Activated naive CD4-positive, alpha-beta T cell treated with anti-CD3 and anti-CD28 coated beads for 36 hours (primary cell): ENCODE measurements at regions of chr4 and their contacts with region 1.

Region 1: DNA sequence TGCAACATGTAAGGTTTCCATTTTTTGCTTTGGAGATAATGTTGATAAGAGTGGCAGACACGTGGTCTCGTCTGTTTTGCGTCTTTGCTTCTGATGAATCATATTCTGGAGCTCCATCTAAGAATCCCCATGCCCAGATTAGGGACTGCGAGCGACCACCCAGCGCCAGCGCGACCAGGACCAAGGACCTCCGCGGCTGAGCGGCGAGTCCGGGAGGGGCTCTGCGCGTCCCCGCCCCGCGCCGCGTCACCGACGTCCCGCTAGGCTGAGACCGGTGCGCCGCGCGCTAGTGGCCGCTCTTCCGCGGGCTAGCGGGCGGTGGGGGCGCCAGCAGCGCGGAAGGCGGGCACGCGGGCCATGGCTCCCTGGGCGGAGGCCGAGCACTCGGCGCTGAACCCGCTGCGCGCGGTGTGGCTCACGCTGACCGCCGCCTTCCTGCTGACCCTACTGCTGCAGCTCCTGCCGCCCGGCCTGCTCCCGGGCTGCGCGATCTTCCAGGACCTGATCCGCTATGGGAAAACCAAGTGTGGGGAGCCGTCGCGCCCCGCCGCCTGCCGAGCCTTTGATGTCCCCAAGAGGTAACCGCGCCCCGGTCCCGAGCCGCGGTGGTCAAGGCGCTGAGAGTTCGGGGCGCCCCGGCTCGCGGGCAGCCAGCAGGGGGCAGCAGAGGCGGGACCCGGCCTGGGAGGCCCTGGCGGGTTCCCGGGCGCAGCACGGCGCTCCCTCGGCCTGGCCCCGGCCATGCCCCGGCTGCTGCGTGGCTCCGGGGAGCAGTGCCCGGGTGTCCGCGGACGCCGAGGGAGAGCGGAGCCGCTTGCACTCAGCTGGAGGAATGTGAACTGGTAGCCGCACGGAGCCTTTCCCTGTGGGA is at the start of gene SRD5A3:
- DNase-seq: peak; percentile 80
- H3K4me3 Mint-ChIP-seq: peak within 1 kb of the TSS; percentile 87
- H3K27ac Mint-ChIP-seq: peak within 1 kb of the TSS; percentile 90
- H3K4me1 Mint-ChIP-seq: peaks cover 20% of the 10 kb centered on the region
- H3K27me3 Mint-ChIP-seq: no peaks in the 10 kb centered on the region
- total RNA-seq, gene SRD5A3: 21.7 to 22.3 TPM

Region 2: DNA sequence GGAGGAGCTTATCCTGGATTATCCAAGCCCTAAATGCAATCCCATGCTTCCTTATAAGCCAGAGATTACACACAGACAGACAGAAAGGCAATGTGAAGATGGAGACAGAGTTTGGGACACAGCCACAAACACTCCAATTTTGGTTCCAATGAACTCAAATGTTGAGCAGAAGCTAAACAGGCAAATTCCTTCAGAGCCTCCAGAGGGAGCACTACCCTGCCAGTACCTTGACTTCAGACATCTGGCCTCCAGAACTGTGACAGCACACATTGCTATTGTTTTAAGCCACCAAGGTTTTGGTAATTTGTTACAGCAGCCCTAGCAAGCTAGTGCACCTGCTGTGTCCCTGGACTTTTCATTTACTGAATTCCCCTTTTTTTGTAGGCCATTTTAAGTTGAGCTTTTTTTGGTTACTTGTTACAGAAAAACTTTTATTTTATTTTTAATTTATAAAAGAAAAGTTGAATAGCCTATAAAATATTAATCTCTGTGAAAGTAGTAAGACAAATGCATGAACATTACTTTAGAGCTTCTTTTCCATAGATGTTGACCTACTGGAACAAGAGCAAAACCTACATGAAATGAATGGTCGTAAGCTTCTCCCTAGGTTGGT is 33.6 kb before region 1 on chr4:
- CTCF ChIA-PET with region 1: interaction called, 11 read pairs
- intact Hi-C with region 1: no loop called
- DNase-seq: peak; percentile 58
- H3K4me3 Mint-ChIP-seq: no peak overlapping the region
- H3K27ac Mint-ChIP-seq: no peak overlapping the region
- H3K4me1 Mint-ChIP-seq: peaks cover 20% of the 10 kb centered on the region
- H3K27me3 Mint-ChIP-seq: no peaks in the 10 kb centered on the region

Region 3: GRCh38 chr4:55358668-55359067 is 12.5 kb after region 1 on chr4:
- CTCF ChIA-PET with region 1: interaction called, 4 read pairs
- intact Hi-C with region 1: loop called (anchors 1 kb)
- DNase-seq: no peak
- H3K4me3 Mint-ChIP-seq: no peak overlapping the region
- H3K27ac Mint-ChIP-seq: peak overlapping the region; percentile 41
- H3K4me1 Mint-ChIP-seq: peaks cover 22% of the 10 kb centered on the region
- H3K27me3 Mint-ChIP-seq: no peaks in the 10 kb centered on the region

Region 4: DNA sequence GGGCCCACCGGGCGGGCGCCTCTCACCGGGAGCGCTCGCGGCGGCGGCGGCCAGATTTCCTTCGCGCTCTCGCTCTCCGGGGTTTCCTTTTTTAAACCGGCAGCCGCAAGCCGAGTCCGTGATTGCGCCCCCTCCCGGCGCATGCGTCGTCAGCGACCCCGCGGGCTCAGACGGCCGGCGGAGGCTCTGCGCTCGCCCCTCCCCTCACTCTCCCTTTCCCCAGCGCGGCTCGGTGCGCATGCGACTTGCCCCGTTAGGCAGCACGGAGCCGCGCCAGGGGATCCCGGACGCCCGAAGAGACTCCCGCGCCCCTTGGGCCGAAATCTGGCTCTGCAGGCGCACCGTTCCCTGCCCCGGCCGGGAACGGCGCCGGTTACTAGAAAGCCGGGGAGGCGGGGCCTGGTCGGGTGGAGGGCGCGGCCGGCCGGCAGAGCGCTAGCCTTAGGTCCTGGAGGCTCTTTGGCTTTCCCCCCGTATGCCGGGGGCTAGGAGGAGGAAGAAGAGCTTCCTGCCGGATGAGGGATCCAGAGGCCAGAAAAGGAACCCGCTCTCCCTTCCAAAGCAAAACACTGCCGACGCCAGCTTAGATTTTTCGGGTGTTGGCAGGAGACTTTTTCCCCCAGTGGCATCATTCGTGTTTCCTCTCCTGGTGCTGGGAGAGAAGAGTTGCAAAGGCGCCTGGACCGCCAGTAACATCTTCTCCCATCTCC is 200.7 kb after region 1 on chr4 and contains the start of gene CLOCK:
- CTCF ChIA-PET with region 1: interaction called, 11 read pairs
- intact Hi-C with region 1: loop called (anchors 2 kb)
- DNase-seq: peak; percentile 83
- H3K4me3 Mint-ChIP-seq: peak within 1 kb of the TSS; percentile 84
- H3K27ac Mint-ChIP-seq: peak within 1 kb of the TSS; percentile 89
- H3K4me1 Mint-ChIP-seq: peaks cover 50% of the 10 kb centered on the region
- H3K27me3 Mint-ChIP-seq: no peaks in the 10 kb centered on the region
- total RNA-seq, gene CLOCK: 8.1 to 8.5 TPM

Region 5: DNA sequence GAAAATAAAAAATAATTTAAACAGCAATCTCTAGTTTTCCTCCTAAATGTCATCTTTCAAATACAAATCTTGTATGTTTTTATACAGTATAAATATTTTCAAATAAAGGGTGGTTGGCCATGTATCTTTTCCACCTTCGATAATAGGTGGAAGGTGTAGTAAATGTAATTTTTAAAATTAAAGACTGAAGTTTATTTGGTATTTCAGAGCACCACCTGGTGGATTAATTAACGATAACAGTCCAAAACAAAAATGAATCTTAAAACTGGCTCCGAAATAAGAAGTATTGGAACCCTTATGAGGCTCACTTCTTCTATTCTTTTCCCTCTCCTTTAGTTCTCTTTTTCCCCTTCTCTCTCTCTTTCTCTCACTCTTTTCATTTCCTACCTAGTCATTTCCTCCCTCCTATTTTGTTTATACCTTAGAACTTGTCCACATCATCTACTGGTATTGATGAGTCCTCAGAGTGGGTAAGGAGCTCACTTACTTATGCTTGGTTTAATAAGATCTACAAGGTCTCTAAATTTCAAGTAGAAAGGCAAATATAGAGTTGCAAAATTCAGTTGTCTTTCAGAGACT is 390.5 kb after region 1 on chr4:
- CTCF ChIA-PET with region 1: no interaction called
- intact Hi-C with region 1: loop called (anchors 2 kb)
- DNase-seq: no peak
- H3K4me3 Mint-ChIP-seq: no peak overlapping the region
- H3K27ac Mint-ChIP-seq: no peak overlapping the region
- H3K4me1 Mint-ChIP-seq: no peaks in the 10 kb centered on the region
- H3K27me3 Mint-ChIP-seq: peaks cover 34% of the 10 kb centered on the region

Region 6: GRCh38 chr4:55993994-55994663 is 647.9 kb after region 1 on chr4:
- CTCF ChIA-PET with region 1: no interaction called
- intact Hi-C with region 1: no loop called
- DNase-seq: peak; percentile 36
- H3K4me3 Mint-ChIP-seq: no peak overlapping the region
- H3K27ac Mint-ChIP-seq: peak overlapping the region; percentile 41
- H3K4me1 Mint-ChIP-seq: peaks cover 33% of the 10 kb centered on the region
- H3K27me3 Mint-ChIP-seq: no peaks in the 10 kb centered on the region

Region 7: GRCh38 chr4:56977321-56978012 is 1631.3 kb after region 1 on chr4 and contains the start of gene NOA1:
- CTCF ChIA-PET with region 1: no interaction called
- intact Hi-C with region 1: loop called (anchors 5 kb)
- DNase-seq: peak; percentile 98
- H3K4me3 Mint-ChIP-seq: peak within 1 kb of the TSS; percentile 100
- H3K27ac Mint-ChIP-seq: peak within 1 kb of the TSS; percentile 99
- H3K4me1 Mint-ChIP-seq: peaks cover 51% of the 10 kb centered on the region
- H3K27me3 Mint-ChIP-seq: no peaks in the 10 kb centered on the region
- total RNA-seq, gene NOA1: 25.4 to 26.0 TPM